ENCODE measurements at regions of chr1 and their contacts with region 1.

Region 1: DNA sequence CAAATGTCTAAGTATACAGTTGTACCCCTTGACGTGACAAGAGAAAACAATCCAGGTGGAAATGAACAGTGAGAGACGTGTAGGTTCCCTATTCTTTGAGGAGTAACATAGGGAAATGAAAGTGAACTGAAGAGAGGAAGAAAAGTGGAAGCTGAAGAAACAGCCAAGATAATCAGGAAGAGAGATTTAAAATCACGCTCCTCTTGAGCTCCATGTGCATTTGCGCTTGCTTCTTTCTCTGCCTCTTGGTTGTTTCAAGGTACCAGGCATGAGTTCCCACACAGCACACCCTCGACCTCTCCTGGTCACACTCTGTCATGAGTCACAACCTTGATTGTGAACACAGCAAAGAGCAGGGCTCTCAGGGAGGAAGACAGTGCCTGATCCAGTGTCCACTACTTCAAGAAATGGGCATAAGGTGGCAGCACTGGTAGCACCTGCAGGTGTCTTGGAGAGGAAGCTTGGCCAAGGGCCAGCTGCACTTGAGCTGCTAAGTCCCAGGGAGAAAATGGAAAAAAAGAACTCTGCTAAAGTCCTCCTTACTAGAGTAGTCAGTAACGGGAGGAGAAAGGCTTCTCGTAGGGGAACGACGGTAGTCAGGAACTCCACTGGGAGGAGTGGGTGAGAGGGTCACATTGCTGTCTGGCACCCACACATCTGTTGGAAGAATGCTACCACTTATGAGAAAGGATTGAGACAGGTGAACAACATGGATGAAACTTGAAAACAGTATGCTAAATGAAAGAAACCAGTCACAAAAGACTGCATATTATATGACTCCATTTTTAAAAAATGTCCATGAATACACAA is 18.3 kb upstream of the ARID1A start:
- DNase-seq: peak; percentile 39
- H3K4me3 ChIP-seq: no peak overlapping the region
- H3K27ac ChIP-seq: no peak overlapping the region
- H3K4me1 ChIP-seq: peaks cover 3 to 4% of the 10 kb centered on the region in 2 experiments; a peak in 1 of 4 replicates
- H3K27me3 ChIP-seq: no peaks in the 10 kb centered on the region
- CTCF ChIP-seq: peak; percentile 55
- EP300 ChIP-seq: no peak
- RAD21 ChIP-seq: peak; percentile 55

Region 2: GRCh38 chr1:26666855-26667254 is 10.7 kb before region 1 on chr1:
- CTCF ChIA-PET with region 1: interaction called, 11 read pairs
- POLR2A ChIA-PET with region 1: no interaction called
- DNase-seq: no peak
- H3K4me3 ChIP-seq: no peak overlapping the region
- H3K27ac ChIP-seq: no peak overlapping the region
- H3K4me1 ChIP-seq: no peaks in the 10 kb centered on the region
- H3K27me3 ChIP-seq: no peaks in the 10 kb centered on the region; the same call in 1 of the 2 replicates
- CTCF ChIP-seq: no peak
- EP300 ChIP-seq: no peak
- RAD21 ChIP-seq: no peak

Region 3: DNA sequence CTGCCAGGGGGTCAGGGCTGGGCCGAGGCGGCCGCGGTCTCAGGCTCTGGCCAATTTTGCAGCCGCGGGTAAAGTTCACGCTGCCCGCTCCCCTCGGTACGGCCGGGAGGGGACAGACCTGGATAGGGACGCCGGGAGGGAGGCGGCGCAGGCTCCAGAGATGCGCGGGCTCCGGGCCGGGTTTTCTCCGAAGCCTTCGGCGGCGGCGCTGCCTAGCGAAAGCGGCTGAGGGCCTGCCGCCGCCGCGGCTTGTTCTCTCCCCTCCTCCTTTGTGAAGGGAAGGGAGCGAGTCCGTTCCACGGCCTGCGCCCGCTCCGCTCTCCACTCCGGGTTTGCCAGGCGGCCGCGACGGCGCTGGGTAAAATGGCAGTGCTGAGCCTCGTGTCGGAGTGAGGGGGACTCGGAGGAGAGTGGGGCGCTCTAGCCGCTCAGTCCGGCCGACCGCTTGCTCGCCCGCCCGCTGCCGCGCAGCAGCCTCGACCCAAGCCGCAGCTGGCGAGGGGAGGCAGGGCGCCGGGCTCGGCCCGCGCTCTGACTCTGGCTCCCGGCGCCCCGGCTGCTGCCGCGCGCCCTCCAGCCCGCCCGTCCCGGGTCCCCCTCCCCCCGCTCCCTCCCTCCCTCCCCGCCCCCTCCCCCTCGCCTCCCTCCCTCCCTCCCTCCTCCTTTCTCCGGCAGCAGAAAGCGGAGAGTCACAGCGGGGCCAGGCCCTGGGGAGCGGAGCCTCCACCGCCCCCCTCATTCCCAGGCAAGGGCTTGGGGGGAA is 18.0 kb after region 1 on chr1 and contains the start of gene ARID1A:
- CTCF ChIA-PET with region 1: interaction called, 12 read pairs
- POLR2A ChIA-PET with region 1: no interaction called
- DNase-seq: peak; percentile 89
- H3K4me3 ChIP-seq: peak within 1 kb of the TSS; percentile 74 to 83
- H3K27ac ChIP-seq: peak within 1 kb of the TSS; percentile 95 to 99
- H3K4me1 ChIP-seq: peaks cover 34 to 41% of the 10 kb centered on the region in 2 experiments
- H3K27me3 ChIP-seq: no peaks in the 10 kb centered on the region
- CTCF ChIP-seq: peak; percentile 18; the same call in 1 of the 2 replicates
- EP300 ChIP-seq: peak in 1 of 2 experiments; percentile 68; a peak in 2 of 4 replicates
- RAD21 ChIP-seq: 0 out of 2 replicates have a peak, but pooled peaks have one; percentile 18
- polyA plus RNA-seq, gene ARID1A: 14.2 and 26.5 TPM in 2 replicates

Region 4: DNA sequence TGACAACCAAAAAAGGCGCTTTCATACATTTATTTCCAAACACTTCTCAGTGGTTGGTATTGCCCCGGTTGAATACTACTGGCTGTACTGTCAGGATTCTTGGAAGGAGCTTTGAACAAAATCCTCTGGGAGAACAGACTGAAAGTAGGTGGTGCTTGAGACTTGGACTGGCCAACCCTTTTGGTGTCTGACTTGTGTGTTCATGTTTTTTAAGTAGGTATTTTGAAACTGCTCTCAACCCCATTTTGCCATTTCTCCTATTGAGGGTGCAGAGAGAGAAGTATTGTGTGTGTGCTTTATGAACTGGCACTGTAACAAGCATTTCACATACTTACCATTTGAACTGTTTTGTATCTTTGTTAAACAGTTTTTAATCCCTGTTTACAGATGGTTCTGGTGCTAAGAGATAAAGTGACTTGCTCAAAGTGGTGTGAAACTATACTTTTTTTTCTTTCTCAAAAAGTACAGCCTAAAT is 39.5 kb after region 1 on chr1:
- CTCF ChIA-PET with region 1: no interaction called
- POLR2A ChIA-PET with region 1: no interaction called
- DNase-seq: no peak
- H3K4me3 ChIP-seq: no peak overlapping the region
- H3K27ac ChIP-seq: peak overlapping the region in 1 of 2 experiments; percentile 13; a peak in 1 of 4 replicates
- H3K4me1 ChIP-seq: peaks cover 0 to 28% of the 10 kb centered on the region in 2 experiments; a peak in 3 of 4 replicates
- H3K27me3 ChIP-seq: no peaks in the 10 kb centered on the region
- CTCF ChIP-seq: no peak
- EP300 ChIP-seq: no peak
- RAD21 ChIP-seq: no peak

Measured in SK-N-SH (cell line).